Prostate gland (tissue), 2 donors: ENCODE measurements at regions of chr3 and their contacts with region 1.

Region 1: GRCh38 chr3:51384726-51385473 is at the start of gene MANF:
- DNase-seq: peak; percentile 99
- H3K4me3 ChIP-seq: peak within 1 kb of the TSS; percentile 78 to 94
- H3K27ac ChIP-seq: peak within 1 kb of the TSS; percentile 91
- H3K4me1 ChIP-seq: peaks cover 16% of the 10 kb centered on the region
- H3K27me3 ChIP-seq: no peaks in the 10 kb centered on the region
- CTCF ChIP-seq: peak in 2 of 4 experiments; percentile 50 to 51
- POLR2A ChIP-seq: peak; percentile 89
- total RNA-seq, gene MANF: 30.6 to 81.4 TPM

Region 2: GRCh38 chr3:50358911-50359759 is 1025.8 kb before region 1 on chr3 and contains the start of gene TMEM115:
- intact Hi-C with region 1: loop called (anchors 10 kb)
- DNase-seq: peak; percentile 99
- H3K4me3 ChIP-seq: peak within 1 kb of the TSS; percentile 68 to 87
- H3K27ac ChIP-seq: peak within 1 kb of the TSS; percentile 83 to 85
- H3K4me1 ChIP-seq: peaks cover 24% of the 10 kb centered on the region
- H3K27me3 ChIP-seq: no peaks in the 10 kb centered on the region
- CTCF ChIP-seq: peak in 1 of 4 experiments; percentile 21
- POLR2A ChIP-seq: peak; percentile 57
- total RNA-seq, gene TMEM115: 73.0 to 76.7 TPM

Region 3: DNA sequence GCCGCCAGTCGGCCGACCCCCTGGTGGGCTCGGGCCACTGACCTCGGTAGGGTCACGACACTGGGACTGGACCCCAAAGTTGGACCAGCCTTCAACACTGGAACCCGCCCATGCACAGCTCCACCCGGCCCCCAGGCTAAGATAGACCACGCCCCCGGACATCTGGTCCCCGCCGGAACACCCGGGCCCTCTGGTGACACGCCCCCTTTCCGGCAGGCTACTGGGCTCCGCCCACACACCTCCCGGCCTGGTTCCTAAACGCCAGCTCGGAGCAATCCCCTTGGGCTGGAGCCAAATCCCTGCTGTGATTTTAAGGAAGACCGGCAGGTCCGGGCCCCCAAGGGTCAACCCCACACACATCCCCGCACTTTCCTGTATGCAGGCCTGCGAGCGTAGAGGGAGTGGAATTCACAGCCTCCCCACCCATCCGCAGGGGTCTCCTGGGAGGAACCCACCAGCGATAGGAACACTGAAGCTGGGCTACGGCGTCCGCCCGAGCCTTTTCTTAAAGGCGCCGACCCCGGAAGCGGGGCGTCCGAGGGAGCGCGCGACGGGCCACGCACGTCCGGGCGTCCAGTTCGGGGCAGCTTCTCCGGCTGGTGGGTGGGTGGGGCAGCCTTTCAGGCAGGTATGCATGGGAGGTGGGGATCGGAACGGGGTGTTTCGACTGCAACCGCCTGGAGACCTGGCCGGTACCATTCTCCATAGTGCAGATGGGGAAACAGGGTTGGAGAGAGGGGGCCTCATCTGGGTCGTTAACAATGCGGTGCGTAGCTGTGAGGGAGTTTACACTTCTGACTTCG is 815.8 kb before region 1 on chr3 and contains the start of gene HEMK1:
- intact Hi-C with region 1: loop called (anchors 5 kb)
- DNase-seq: peak; percentile 97
- H3K4me3 ChIP-seq: peak within 1 kb of the TSS; percentile 66 to 70
- H3K27ac ChIP-seq: peak within 1 kb of the TSS; percentile 78 to 87
- H3K4me1 ChIP-seq: peaks cover 3% of the 10 kb centered on the region
- H3K27me3 ChIP-seq: no peaks in the 10 kb centered on the region
- CTCF ChIP-seq: peak in 1 of 4 experiments; percentile 7
- POLR2A ChIP-seq: peak; percentile 66
- total RNA-seq, gene HEMK1: 8.5 to 17.1 TPM

Region 4: GRCh38 chr3:51670823-51671733 is 286.2 kb after region 1 on chr3 and contains the start of gene TEX264:
- intact Hi-C with region 1: loop called (anchors 2 kb)
- DNase-seq: peak; percentile 92
- H3K4me3 ChIP-seq: peak within 1 kb of the TSS; percentile 78 to 94
- H3K27ac ChIP-seq: peak within 1 kb of the TSS; percentile 82 to 92
- H3K4me1 ChIP-seq: peaks cover 20% of the 10 kb centered on the region
- H3K27me3 ChIP-seq: no peaks in the 10 kb centered on the region
- CTCF ChIP-seq: peak in 2 of 4 experiments; percentile 21 to 30
- POLR2A ChIP-seq: peak; percentile 74
- total RNA-seq, gene TEX264: 157 to 214 TPM